A549 (cell line): ENCODE measurements at regions of chr9 and their contacts with region 1.

Region 1: GRCh38 chr9:129610473-129611301 is 10.2 kb downstream of the C9orf50 start:
- DNase-seq: peak; percentile 74 to 88
- ATAC-seq: peak; percentile 57 to 62
- H3K4me3 ChIP-seq: peak overlapping the region; percentile 55
- H3K27ac ChIP-seq: peak overlapping the region; percentile 100
- H3K4me1 ChIP-seq: peaks cover 62% of the 10 kb centered on the region
- CTCF ChIP-seq: peak; percentile 91
- EP300 ChIP-seq: no peak
- POLR2A ChIP-seq: peak; percentile 19
- RAD21 ChIP-seq: peak; percentile 87 to 99

Region 2: DNA sequence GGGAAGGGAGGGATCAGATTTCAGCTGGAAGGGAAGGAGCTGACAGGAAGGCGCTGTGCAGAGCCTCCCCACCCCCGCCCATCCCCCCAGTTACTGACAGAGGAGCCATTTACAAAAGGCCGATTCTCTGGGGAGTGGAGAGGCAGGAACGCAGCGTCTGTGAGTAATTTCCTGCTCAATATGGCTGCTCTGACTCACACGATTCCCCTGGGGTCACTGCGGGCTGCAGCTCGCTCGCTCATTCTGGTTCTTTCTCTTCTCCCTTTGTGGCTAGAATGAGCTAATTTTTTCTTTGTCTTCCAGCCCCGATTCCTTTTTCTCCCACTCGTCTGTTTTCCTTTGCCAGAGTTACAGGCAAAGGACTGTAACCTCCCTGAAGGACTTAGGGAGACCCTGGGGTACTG is 470.7 kb before region 1 on chr9:
- CTCF ChIA-PET with region 1: interaction called, 653 read pairs
- POLR2A ChIA-PET with region 1: interaction called, 13 read pairs
- DNase-seq: peak; percentile 95 to 97
- ATAC-seq: peak; percentile 81 to 82
- H3K4me3 ChIP-seq: peak overlapping the region; percentile 44
- H3K27ac ChIP-seq: peak overlapping the region; percentile 99
- H3K4me1 ChIP-seq: peaks cover 60% of the 10 kb centered on the region
- CTCF ChIP-seq: no peak
- EP300 ChIP-seq: peak in 1 of 2 experiments; percentile 62; a peak in 1 of 5 replicates
- POLR2A ChIP-seq: peak; percentile 45
- RAD21 ChIP-seq: peak in 1 of 2 experiments; percentile 30; a peak in 2 of 5 replicates

Region 3: DNA sequence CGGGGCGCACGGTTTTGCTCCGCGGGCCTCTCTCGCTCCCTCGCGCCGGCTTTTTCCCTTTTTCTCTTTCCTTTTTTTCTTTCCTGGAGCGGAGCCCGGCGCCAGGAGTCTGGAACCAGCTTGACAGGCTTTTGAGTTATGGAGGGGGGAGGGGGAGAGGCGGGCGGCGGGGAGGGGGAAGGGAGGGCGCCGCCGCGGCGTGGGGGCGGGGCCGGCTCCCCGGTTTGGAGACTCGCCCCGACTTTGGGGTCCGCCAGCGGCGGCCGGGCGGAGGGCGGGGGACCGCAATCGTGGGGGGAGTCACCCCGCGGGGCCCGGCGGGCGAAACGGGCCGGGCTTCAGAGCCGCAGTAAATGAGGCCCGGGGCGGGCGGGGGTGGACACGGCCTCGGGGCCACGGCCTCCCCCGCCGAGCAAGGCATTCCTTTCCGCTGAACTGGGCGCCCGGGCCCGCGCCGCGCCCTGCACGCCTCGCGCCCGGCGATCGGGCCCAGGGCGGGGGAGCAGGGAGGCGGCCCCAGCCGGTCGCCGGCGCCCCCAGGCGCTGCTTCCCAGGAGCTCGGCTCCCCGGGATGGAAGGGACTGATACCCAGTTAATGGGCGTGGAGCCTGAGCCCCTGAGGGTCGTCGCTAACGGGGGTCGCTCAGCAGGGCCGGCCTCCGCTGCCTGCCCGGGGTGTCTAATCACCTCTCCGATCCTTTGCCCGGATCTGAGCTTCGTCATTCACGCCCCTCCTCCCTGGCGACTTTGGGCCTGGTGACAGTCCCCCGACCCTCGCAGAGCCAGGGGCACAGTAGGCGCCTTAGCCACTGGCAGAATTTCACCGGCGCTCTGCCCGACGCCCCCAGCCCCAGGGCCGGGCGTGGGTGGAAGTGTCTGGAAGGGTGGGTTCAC is 127.9 kb before region 1 on chr9:
- CTCF ChIA-PET with region 1: interaction called, 12 read pairs
- POLR2A ChIA-PET with region 1: interaction called, 21 read pairs
- DNase-seq: peak in 1 of 2 experiments; percentile 86
- ATAC-seq: peak; percentile 47 to 64
- H3K4me3 ChIP-seq: peak overlapping the region; percentile 47
- H3K27ac ChIP-seq: peak overlapping the region; percentile 99 to 100
- H3K4me1 ChIP-seq: peaks cover 90% of the 10 kb centered on the region
- CTCF ChIP-seq: no peak; the same call in 2 of the 3 replicates
- EP300 ChIP-seq: peak; percentile 71 to 93; a peak in 4 of 5 replicates
- POLR2A ChIP-seq: peak; percentile 29; the same call in 1 of the 2 replicates
- RAD21 ChIP-seq: peak in 1 of 2 experiments; percentile 43; a peak in 2 of 5 replicates

Region 4: DNA sequence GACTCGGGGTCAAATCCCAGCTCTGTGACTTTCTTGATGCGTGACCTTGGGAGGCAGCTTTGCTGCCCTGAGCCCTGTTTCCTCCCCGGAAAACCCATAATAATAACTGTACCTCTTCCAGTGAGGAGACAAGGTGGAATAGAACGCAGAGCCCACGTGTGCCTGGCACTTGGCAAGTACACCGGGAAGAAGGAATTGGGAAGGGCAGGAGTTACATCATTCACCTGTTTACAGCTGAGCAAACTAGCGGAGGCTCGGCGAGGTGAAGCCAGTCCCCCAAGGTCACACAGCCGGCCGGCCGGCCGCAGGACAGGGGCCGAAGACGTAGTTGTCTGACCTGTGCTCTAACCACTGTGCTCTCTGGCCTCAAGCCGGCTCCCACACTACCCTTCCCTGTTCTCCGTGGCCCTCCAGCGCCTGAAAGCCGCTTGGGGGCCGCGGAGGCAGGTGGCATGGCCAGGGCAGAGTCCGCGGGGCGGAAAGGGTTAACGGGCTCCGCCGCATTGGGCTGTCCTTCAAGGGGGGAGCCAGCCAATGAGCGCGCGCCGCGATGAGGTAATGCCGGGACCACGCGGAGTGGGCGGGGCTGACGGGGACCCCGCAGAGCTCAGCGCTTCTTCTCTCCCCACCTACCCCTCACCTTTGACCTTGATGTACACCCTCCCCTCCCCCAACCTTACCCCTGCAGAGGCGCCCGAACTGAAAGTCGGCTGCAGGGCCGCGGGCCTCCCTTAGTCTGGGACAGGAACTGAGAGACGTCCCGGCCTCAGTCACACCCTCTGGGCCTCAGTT is 115.0 kb before region 1 on chr9:
- CTCF ChIA-PET with region 1: interaction called, 16 read pairs
- POLR2A ChIA-PET with region 1: interaction called, 22 read pairs
- DNase-seq: peak; percentile 95 to 97
- ATAC-seq: peak; percentile 63 to 76
- H3K4me3 ChIP-seq: peak overlapping the region; percentile 63
- H3K27ac ChIP-seq: peak overlapping the region; percentile 99 to 100
- H3K4me1 ChIP-seq: peaks cover 86% of the 10 kb centered on the region
- CTCF ChIP-seq: no peak
- EP300 ChIP-seq: peak; percentile 27 to 42; a peak in 1 of 5 replicates
- POLR2A ChIP-seq: no peak; the same call in 1 of the 2 replicates
- RAD21 ChIP-seq: peak; percentile 14 to 50; a peak in 3 of 5 replicates

Region 5: DNA sequence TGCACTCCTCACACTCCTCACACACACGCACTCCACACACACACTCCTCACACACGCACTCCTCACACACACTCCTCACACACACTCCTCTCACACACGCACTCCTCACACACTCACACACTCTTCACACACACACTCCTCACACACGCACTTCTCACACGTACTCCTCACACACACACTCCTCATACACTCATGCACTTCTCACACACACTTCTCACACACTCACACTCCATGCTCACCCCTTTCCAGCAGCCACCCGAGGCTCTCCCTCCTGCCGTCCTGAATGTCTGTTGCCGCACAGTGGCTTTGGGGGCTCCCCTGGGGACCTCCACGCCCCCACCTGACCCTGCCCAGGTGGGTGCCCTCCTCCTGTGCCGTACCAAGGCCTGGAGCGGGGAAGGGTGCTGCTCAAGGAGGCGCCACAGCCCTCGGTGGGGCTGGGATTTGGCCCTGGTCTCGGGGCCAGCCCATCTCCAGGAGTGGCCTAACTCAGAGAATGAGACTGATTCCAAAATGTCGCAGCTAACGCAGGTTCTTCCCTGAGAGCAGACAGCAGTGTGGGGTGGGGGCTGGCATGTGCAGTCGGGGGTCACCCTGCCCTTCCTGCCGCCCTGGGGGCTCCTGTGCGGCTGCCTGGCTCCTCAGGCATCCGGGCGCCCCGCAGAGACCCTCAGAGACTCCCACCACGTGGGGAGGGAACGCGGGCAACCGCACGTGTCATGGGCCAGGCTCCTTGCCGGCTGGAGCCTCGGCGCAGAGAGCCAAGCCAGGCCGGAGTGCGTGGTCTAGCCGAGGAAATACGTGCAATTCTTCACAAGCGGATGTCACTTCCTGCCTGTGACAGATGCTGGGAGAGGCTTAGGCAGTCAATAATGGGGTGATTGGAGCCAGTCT is 34.1 kb before region 1 on chr9:
- CTCF ChIA-PET with region 1: interaction called, 29 read pairs
- POLR2A ChIA-PET with region 1: no interaction called
- DNase-seq: no peak
- ATAC-seq: no peak
- H3K4me3 ChIP-seq: no peak overlapping the region
- H3K27ac ChIP-seq: peak overlapping the region; percentile 79 to 99
- H3K4me1 ChIP-seq: peaks cover 26% of the 10 kb centered on the region
- CTCF ChIP-seq: no peak
- EP300 ChIP-seq: no peak
- POLR2A ChIP-seq: no peak
- RAD21 ChIP-seq: no peak

Region 6: GRCh38 chr9:129626079-129626624 is 15.5 kb after region 1 on chr9 and contains the start of gene NTMT1:
- CTCF ChIA-PET with region 1: interaction called, 177 read pairs
- POLR2A ChIA-PET with region 1: interaction called, 4 read pairs
- DNase-seq: peak; percentile 77 to 87
- ATAC-seq: peak; percentile 78 to 84
- H3K4me3 ChIP-seq: peak within 1 kb of the TSS; percentile 69
- H3K27ac ChIP-seq: peak within 1 kb of the TSS; percentile 78 to 98
- H3K4me1 ChIP-seq: peaks cover 28% of the 10 kb centered on the region
- CTCF ChIP-seq: no peak
- EP300 ChIP-seq: no peak
- POLR2A ChIP-seq: peak; percentile 93
- RAD21 ChIP-seq: no peak
- polyA plus RNA-seq, gene NTMT1: 39.2 and 49.4 TPM in 2 replicates

Region 7: DNA sequence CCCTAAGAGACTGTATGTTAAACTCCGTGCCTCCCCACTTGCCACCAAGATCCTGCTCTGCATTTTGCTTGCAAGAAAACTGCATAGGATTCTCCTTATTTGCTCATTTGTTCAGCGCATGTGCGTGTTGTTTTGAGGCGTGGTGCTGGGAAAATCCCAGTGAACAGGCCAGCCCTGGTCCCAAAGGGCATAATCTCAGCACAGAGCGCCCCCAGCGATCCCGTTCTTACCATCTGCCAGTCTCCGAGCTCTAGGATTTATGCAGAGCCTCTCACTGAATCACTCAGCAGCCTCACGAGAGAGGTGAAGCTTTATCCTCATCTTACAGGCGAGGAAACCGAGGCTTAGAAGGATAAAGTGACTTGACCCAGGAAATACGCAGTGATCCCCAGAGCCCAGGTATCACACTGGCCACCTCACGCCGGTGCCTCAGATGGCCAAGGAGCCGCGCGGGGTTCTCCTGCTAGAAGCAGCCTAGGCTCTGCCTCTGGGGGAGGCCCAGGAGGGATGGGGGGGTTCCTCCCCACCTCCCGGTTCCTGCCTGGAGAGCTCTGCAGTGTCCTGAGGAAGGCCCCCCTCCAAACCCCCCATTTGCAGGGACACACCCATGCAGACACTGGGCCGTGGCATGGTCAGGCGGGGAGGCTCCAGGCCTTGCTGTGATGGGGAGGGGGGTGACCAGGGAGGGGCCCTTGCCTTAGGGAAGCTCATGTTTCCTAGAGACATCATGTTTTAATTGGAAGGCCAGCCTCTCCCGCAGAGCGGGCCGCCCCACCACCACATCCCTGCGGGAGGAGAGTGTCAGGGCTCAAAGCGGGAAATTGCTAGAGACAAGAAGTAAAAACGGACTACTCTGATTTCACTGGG is 66.5 kb after region 1 on chr9:
- CTCF ChIA-PET with region 1: no interaction called
- POLR2A ChIA-PET with region 1: no interaction called
- DNase-seq: no peak
- ATAC-seq: peak in 1 of 2 experiments; percentile 43; a peak in 2 of 6 replicates
- H3K4me3 ChIP-seq: no peak overlapping the region
- H3K27ac ChIP-seq: no peak overlapping the region
- H3K4me1 ChIP-seq: no peaks in the 10 kb centered on the region
- CTCF ChIP-seq: no peak
- EP300 ChIP-seq: no peak
- POLR2A ChIP-seq: no peak
- RAD21 ChIP-seq: no peak